ENCODE measurements at regions of chr3 and their contacts with region 1.

Region 1: GRCh38 chr3:43378066-43378935 is 92.0 kb downstream of the SNRK start:
- DNase-seq: peak; percentile 83
- ATAC-seq: peak; percentile 96
- H3K4me3 Mint-ChIP-seq: no peak overlapping the region
- H3K27ac Mint-ChIP-seq: peak overlapping the region; percentile 65
- H3K4me1 Mint-ChIP-seq: peaks cover 16% of the 10 kb centered on the region
- H3K27me3 Mint-ChIP-seq: no peaks in the 10 kb centered on the region

Region 2: GRCh38 chr3:43223670-43224364 is 154.5 kb before region 1 on chr3:
- CTCF ChIA-PET with region 1: interaction called, 25 read pairs
- POLR2A ChIA-PET with region 1: no interaction called
- DNase-seq: no peak
- ATAC-seq: no peak
- H3K4me3 Mint-ChIP-seq: no peak overlapping the region
- H3K27ac Mint-ChIP-seq: no peak overlapping the region
- H3K4me1 Mint-ChIP-seq: peaks cover 33% of the 10 kb centered on the region
- H3K27me3 Mint-ChIP-seq: no peaks in the 10 kb centered on the region

Region 3: GRCh38 chr3:43389388-43390254 is 11.3 kb after region 1 on chr3:
- CTCF ChIA-PET with region 1: interaction called, 62 read pairs
- POLR2A ChIA-PET with region 1: interaction called, 3 read pairs
- DNase-seq: peak; percentile 87
- ATAC-seq: peak; percentile 91
- H3K4me3 Mint-ChIP-seq: peak overlapping the region; percentile 22
- H3K27ac Mint-ChIP-seq: peak overlapping the region; percentile 89
- H3K4me1 Mint-ChIP-seq: peaks cover 53% of the 10 kb centered on the region
- H3K27me3 Mint-ChIP-seq: no peaks in the 10 kb centered on the region

Region 4: GRCh38 chr3:43477600-43477999 is 99.3 kb after region 1 on chr3:
- CTCF ChIA-PET with region 1: no interaction called
- POLR2A ChIA-PET with region 1: no interaction called
- DNase-seq: peak; percentile 81
- ATAC-seq: peak; percentile 96
- H3K4me3 Mint-ChIP-seq: peak overlapping the region; percentile 12
- H3K27ac Mint-ChIP-seq: peak overlapping the region; percentile 91
- H3K4me1 Mint-ChIP-seq: peaks cover 25% of the 10 kb centered on the region
- H3K27me3 Mint-ChIP-seq: no peaks in the 10 kb centered on the region

Measured in activated CD8-positive, alpha-beta T cell treated with anti-CD3 and anti-CD28 coated beads, Interleukin-2, amount 10 ng/mL, durations not matched to agents 7 days and 5 days (primary cell).